ENCODE measurements at regions of chr5 and their contacts with region 1.

Region 1: GRCh38 chr5:7927466-7928375 is 58.8 kb downstream of the MTRR start:
- DNase-seq: no peak
- H3K4me3 ChIP-seq: no peak overlapping the region
- CTCF ChIP-seq: peak; percentile 83

Region 2: DNA sequence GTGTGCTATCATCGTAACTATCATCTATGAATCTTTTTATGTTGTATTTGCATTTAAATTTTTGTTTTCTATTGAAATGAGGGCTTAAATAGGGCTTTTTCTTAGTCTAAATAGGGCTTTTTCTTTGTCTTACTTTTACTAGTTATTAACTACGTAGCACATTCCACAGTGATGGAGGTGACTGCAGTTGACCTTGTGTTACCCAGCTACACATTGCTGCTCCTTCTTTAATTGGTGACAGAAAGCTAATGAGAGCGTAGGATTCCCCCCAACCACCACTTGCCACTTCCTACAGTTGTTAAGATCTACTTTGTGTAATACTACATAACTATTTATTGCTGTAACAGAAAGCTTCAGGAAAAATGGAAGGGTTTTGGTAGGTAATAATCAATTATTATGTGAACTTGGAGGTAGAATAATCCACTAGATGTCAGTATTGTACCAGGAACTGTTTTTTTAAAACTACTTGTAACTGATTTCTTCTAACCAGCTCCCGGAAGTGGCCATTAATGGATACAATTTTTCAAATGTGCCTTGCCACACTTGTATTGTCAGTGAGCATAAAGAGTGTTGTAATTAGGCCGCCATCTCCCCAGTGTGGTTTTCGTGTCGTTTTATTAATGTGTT is 40.8 kb before region 1 on chr5:
- CTCF ChIA-PET with region 1: interaction called, 17 read pairs
- POLR2A ChIA-PET with region 1: no interaction called
- DNase-seq: no peak
- H3K4me3 ChIP-seq: no peak overlapping the region
- CTCF ChIP-seq: peak; percentile 18

Region 3: DNA sequence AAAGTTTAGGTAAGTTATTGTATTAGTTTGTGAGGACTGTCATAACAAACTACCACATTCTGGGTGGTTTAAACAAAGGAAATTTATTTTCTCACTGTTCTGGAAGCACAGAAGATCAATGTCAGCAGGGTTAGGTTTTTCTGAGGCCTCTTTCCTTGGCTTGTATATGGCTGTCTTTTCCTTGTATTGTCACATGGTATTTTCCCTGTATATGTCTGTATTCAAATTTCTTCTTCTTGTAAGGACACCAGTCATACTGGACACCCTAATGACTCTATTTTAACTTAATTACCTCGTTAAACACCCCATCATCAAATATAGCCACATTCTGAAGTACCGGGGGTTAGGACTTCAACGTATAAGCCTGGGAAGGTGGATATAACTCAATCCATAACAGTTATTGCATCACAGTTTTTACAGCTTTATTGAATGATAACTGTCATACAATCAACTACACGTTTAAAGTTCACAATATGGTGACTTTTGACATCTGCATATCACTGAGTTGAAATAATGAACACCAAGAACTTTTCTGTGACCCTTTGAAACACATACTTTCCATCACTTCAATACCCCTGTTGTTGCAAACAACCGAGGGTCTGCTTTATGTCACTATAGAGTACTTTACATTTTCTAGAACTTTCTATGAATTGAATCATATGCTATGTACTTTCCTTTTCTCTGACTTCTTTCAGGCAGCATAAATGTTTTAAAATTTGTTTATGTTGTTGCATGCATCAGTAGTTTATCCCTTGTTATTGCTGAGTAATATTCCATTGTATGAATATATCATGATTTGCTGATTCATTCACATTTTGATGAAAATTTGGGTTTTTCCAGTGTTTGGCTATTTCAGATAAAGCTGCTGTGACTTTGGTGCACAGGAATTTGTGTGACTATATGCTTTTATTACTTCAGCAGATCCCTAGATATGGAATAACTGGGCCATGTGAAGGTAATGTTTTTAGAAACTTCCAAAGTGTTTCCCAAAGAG is 10.3 kb before region 1 on chr5:
- CTCF ChIA-PET with region 1: interaction called, 13 read pairs
- POLR2A ChIA-PET with region 1: no interaction called
- DNase-seq: no peak
- H3K4me3 ChIP-seq: no peak overlapping the region
- CTCF ChIP-seq: no peak

Region 4: GRCh38 chr5:7941692-7942091 is 14.0 kb after region 1 on chr5:
- CTCF ChIA-PET with region 1: interaction called, 41 read pairs
- POLR2A ChIA-PET with region 1: no interaction called
- DNase-seq: no peak
- H3K4me3 ChIP-seq: no peak overlapping the region
- CTCF ChIP-seq: no peak

Measured in AG04449 (cell line).